Ovary (tissue), 10 donors: ENCODE measurements at regions of chr10 and their contacts with region 1.

Region 1: DNA sequence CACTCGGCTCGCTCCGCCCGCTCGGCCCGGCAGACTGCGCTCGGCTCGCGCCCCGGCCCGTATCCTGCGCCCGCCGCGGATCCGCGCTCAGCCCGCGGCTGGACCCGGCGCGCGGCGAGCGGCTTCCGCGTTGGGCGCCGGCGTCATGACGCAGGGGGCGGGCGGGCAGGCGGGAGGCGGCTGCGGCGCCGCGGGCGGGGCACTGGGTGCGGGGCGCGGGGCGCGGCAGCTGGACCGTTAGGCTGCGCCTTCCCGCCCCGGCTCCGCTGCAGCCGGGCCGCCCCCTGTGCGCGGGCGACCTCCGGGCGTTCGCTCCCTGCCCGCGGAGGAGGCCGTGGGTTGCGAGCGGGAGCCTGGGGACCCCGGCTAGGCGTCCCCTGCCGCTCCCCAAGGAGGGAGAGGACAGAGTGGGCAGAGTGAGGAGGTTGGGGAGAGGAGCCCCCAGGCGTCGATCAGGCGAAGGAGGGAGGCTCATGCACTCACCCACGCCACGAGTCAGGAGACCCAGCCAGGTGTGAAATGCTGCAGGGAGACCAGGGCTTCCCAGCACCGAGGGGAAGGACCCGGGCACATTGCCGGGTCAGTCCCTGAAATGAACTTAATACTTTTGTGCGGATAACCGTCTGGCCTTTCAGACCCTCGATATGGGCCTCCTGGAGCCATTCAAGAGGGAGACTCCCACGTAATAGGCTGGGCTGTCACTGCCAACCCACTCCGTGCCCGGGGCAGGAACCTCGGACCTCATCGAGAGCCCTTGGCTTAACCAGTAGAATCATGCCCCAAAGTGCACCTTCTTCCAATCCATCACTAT is at the start of gene PIP4K2A:
- DNase-seq: peak; percentile 51 to 80 (median 59)
- H3K4me3 ChIP-seq: peak within 1 kb of the TSS; percentile 95
- H3K27ac ChIP-seq: peak within 1 kb of the TSS in 1 of 2 donors; percentile 61
- H3K4me1 ChIP-seq: no peaks in the 10 kb centered on the region
- H3K27me3 ChIP-seq: no peaks in the 10 kb centered on the region
- CTCF ChIP-seq: no peak
- EP300 ChIP-seq: no peak
- POLR2A ChIP-seq: no peak
- total RNA-seq, gene PIP4K2A: 4.3 to 27.0 (median 18.4) TPM

Region 2: GRCh38 chr10:22597138-22597537 is 117.5 kb before region 1 on chr10:
- intact Hi-C with region 1: loop called in 1 of 4 experiments (anchors 10 kb)
- DNase-seq: no peak
- H3K4me3 ChIP-seq: no peak overlapping the region
- H3K27ac ChIP-seq: no peak overlapping the region
- H3K4me1 ChIP-seq: no peaks in the 10 kb centered on the region
- H3K27me3 ChIP-seq: no peaks in the 10 kb centered on the region
- CTCF ChIP-seq: no peak
- EP300 ChIP-seq: no peak
- POLR2A ChIP-seq: no peak

Region 3: DNA sequence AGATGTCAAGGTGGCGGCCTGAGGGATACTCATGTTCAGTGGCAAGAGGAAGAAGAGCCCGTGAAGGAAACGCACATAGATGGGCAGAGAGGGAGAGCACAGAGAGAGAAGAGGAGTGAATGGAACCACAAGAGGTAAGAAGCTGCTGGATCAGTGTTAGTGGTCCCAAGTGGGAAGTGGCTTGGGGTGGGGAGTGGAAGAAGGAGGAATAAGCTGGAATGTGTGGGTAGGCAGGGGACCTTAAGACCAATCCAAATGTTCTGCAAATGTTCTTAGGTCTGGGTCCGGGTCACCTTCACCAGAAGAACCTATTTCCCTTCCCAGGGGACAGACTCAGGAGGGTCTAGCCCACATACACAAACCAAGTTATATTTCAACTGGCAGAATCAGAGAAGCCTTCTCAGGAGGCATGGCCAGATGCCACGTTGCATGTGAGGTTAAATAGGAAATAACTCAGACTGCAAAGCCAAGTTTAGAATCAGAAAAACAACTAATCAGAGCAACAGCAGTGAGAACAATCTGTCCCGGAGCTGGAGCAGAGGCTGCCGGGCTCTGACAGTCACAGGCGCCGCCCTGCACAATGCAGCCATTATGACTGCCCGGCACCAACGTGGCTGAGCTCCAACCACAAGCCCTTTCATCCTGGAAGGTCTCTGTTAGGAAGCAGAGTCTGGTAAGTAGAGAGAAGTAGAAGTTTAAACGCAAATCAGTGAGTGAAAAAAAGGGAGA is 134.6 kb after region 1 on chr10:
- intact Hi-C with region 1: no loop called
- DNase-seq: peak in 4 of 5 donors; percentile 19 to 69 (median 32)
- H3K4me3 ChIP-seq: no peak overlapping the region
- H3K27ac ChIP-seq: no peak overlapping the region
- H3K4me1 ChIP-seq: peaks cover 2% of the 10 kb centered on the region
- H3K27me3 ChIP-seq: no peaks in the 10 kb centered on the region
- CTCF ChIP-seq: no peak
- EP300 ChIP-seq: peak; percentile 26
- POLR2A ChIP-seq: no peak